ENCODE measurements at regions of chr1 and their contacts with region 1.

Region 1: DNA sequence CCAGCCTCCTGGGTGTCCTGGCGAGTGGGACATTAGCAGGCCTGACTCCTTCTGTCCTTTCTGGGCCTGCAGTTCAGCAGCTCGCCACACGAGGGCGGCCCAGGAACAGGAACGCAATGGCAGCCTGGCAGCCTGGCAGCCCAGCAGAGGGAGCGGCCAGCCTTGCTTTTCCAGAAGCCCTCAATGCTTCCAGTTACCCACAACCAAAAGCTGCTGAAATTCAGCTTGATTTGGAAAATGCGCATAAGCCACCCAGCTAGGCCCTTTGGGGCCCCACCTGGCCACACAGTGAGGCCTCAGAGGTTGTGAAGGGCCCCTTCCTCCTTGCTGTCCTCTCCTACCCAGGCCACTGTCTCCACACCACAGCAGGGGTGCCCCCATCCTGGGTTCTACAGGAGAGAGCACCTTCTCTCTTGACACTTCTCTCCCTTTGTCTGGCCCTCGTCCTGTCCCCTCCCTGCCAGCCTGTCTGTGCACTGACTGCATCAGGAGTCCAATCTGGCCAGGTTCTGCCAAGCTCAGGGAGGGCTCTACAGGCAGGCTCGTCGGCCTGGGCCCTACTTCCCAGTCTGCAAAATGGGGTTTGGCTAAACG is 103.4 kb upstream of the VAMP3 start:
- DNase-seq: peak; percentile 98
- H3K4me3 ChIP-seq: no peak overlapping the region
- H3K27ac ChIP-seq: peak overlapping the region in 1 of 4 donors; percentile 45
- H3K4me1 ChIP-seq: peaks cover 7 to 30% (median 20%) of the 10 kb centered on the region in 4 donors
- H3K27me3 ChIP-seq: peaks cover 0 to 7% (median 0%) of the 10 kb centered on the region in 4 donors
- CTCF ChIP-seq: peak in 2 of 3 experiments; percentile 100
- EP300 ChIP-seq: no peak
- POLR2A ChIP-seq: no peak

Region 2: GRCh38 chr1:7752512-7753417 is 85.0 kb after region 1 on chr1:
- intact Hi-C with region 1: loop called (anchors 1 kb)
- DNase-seq: no peak
- H3K4me3 ChIP-seq: peak overlapping the region; percentile 34 to 50 (median 48)
- H3K27ac ChIP-seq: peak overlapping the region; percentile 7 to 41 (median 28)
- H3K4me1 ChIP-seq: peaks cover 0 to 15% (median 12%) of the 10 kb centered on the region in 4 donors
- H3K27me3 ChIP-seq: no peaks in the 10 kb centered on the region
- CTCF ChIP-seq: peak; percentile 74 to 88 (median 78)
- EP300 ChIP-seq: no peak
- POLR2A ChIP-seq: no peak

Region 3: DNA sequence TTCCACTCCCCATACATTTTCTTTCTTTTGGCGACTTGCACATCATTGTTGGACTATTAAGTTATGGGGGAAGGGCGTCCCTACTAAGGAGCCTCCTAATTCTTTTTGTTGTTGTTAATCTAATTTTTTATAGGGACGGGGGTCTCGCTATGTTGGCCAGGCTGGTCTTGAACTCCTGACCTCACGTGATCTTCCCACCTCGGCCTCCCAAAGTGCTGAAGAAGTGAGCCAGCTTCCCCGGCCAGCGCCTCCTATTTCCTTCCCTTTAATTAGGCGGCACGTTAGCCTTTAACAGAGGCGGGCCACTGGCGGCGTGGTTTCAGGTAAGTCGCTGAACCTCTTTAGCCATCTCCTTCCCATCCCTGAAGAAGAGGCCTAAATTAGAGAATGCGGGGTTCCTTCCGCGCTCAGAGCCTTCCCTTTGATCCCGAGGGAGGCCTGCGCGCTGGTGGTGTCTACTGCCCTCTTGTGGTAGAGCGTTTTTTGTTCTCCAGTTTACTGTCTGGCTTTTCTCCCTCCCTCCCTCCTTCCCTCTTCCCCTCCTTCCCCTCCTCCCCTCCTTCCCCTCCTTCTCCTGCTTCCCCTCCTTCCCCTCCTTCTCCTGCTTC is 234.9 kb after region 1 on chr1:
- intact Hi-C with region 1: loop called (anchors 2 kb)
- DNase-seq: no peak
- H3K4me3 ChIP-seq: peak overlapping the region; percentile 21 to 50 (median 34)
- H3K27ac ChIP-seq: no peak overlapping the region
- H3K4me1 ChIP-seq: peaks cover 0 to 6% (median 5%) of the 10 kb centered on the region in 4 donors
- H3K27me3 ChIP-seq: no peaks in the 10 kb centered on the region
- CTCF ChIP-seq: peak; percentile 62 to 72 (median 65)
- EP300 ChIP-seq: no peak
- POLR2A ChIP-seq: no peak

Region 4: GRCh38 chr1:7942214-7942921 is 274.6 kb after region 1 on chr1:
- intact Hi-C with region 1: no loop called
- DNase-seq: peak; percentile 93
- H3K4me3 ChIP-seq: peak overlapping the region; percentile 42 to 53 (median 44)
- H3K27ac ChIP-seq: peak overlapping the region in 3 of 4 donors; percentile 48 to 60 (median 55)
- H3K4me1 ChIP-seq: peaks cover 10 to 17% (median 13%) of the 10 kb centered on the region in 4 donors
- H3K27me3 ChIP-seq: peaks cover 0 to 15% (median 0%) of the 10 kb centered on the region in 4 donors
- CTCF ChIP-seq: peak in 2 of 3 experiments; percentile 12 to 52
- EP300 ChIP-seq: no peak
- POLR2A ChIP-seq: no peak